HAP-1 (cell line): ENCODE measurements at regions of chr3 and their contacts with region 1.

Region 1: DNA sequence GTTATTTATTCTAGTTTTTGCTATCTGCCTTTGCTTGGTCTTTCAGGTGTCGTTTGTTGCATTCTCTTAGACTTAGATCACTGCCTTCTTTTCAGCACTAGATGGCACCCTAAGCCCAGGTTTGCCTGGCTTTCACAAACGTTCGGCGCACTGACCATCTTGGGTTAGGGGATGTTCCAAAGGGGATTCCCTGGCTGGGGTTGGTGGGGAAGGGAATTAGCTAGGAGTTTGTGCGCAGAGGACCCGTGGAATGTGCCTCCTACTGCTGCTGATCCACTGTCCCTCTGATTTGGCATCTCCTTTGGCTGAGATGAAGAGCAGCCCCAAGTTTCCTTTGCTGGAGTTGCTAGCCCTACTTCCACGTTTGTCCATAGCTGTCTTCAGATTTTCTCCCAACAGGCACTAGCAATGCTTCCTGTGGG is 33.9 kb downstream of the PFN2 start:
- DNase-seq: peak; percentile 60 to 75
- H3K4me3 ChIP-seq: no peak overlapping the region
- H3K4me1 ChIP-seq: no peaks in the 10 kb centered on the region
- H3K27me3 ChIP-seq: no peaks in the 10 kb centered on the region

Region 2: GRCh38 chr3:149999421-149999820 is 62.6 kb after region 1 on chr3:
- in situ Hi-C with region 1: loop called (anchors 5 kb)
- DNase-seq: no peak
- H3K4me3 ChIP-seq: no peak overlapping the region
- H3K4me1 ChIP-seq: no peaks in the 10 kb centered on the region
- H3K27me3 ChIP-seq: no peaks in the 10 kb centered on the region; the same call in 1 of the 2 replicates

Region 3: GRCh38 chr3:150194513-150194912 is 257.7 kb after region 1 on chr3:
- in situ Hi-C with region 1: no loop called
- DNase-seq: no peak
- H3K4me3 ChIP-seq: no peak overlapping the region
- H3K4me1 ChIP-seq: peaks cover 7% of the 10 kb centered on the region
- H3K27me3 ChIP-seq: no peaks in the 10 kb centered on the region

Region 4: DNA sequence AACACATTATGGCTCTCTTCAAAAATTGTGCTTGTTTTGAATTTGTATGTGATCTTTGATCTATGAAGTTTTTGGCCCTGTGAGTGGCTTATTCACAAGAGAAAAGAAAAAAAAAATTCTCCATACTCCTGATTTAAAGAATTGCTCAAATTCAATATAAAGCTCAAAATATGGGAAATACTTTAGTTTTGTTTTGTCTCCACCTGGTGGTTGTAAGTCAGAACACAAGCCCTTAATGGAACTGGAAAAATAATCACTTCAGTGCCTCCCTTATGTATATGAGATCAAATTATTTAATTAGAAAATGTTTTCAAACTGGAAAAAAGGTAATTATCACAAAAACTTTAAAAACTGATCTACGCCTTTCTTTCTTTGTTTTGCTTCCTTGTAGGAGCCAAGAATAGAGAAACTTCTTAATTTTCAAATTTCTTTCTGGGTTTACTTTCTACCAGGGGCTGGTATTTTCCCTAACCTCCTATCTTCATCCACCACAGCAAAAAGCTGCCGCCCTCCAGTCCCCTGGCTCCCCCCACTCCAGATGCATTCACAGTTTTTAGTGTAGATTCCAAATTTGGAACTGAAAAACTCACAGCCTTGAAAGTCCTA is 558.8 kb after region 1 on chr3:
- in situ Hi-C with region 1: loop called (anchors 25 kb)
- DNase-seq: peak; percentile 29 to 63
- H3K4me3 ChIP-seq: no peak overlapping the region
- H3K4me1 ChIP-seq: no peaks in the 10 kb centered on the region
- H3K27me3 ChIP-seq: no peaks in the 10 kb centered on the region